Psoas muscle (tissue), 8 donors: ENCODE measurements at regions of chr10 and their contacts with region 1.

Region 1: GRCh38 chr10:123132576-123133477 is 2.9 kb upstream of the HMX3 start:
- DNase-seq: peak; percentile 80 to 90
- ATAC-seq: peak; percentile 83 to 89 (median 88)
- H3K4me3 ChIP-seq: peak overlapping the region; percentile 34
- H3K27ac ChIP-seq: no peak overlapping the region
- H3K4me1 ChIP-seq: peaks cover 29% of the 10 kb centered on the region
- H3K27me3 ChIP-seq: peaks cover 0 to 97% (median 53%) of the 10 kb centered on the region in 3 donors
- CTCF ChIP-seq: peak; percentile 89

Region 2: DNA sequence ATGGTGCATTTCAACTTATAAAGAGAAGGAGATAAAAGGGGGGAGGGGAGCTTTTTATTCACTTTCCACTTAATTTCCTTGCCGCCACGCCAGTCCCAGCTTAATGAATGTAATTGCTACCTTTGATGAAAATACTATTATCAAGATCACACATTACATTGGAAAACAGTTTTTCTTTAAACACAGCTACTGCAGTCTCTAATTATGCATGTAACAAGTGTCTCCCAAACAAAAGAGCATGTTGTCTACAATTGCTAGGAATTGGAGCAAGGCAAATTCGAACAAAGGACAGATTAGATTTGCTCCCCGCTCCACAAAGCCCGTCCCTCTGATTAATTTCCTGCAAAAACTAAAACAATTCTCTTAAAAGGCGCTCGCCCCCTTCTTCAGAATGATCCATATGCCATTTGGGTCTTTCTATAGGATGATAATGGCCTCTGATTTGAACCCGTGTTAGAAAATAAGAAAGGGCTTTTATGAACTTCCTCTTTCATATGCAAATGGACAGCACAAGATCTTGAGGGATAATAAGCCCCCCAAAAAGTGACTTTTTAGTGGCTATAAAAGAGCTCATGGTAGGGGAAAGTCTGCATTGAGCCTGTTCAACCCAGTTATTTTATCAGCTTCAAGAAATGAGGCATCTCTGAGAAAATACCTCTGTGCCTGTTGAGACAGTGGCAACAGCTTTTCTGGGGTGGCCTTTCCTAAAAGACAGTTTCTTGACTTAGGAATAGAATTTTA is 63.4 kb before region 1 on chr10:
- intact Hi-C with region 1: no loop called
- DNase-seq: no peak
- ATAC-seq: no peak
- H3K4me3 ChIP-seq: no peak overlapping the region
- H3K27ac ChIP-seq: no peak overlapping the region
- H3K4me1 ChIP-seq: no peaks in the 10 kb centered on the region
- H3K27me3 ChIP-seq: peaks cover 0 to 9% (median 3%) of the 10 kb centered on the region in 3 donors
- CTCF ChIP-seq: no peak

Region 3: DNA sequence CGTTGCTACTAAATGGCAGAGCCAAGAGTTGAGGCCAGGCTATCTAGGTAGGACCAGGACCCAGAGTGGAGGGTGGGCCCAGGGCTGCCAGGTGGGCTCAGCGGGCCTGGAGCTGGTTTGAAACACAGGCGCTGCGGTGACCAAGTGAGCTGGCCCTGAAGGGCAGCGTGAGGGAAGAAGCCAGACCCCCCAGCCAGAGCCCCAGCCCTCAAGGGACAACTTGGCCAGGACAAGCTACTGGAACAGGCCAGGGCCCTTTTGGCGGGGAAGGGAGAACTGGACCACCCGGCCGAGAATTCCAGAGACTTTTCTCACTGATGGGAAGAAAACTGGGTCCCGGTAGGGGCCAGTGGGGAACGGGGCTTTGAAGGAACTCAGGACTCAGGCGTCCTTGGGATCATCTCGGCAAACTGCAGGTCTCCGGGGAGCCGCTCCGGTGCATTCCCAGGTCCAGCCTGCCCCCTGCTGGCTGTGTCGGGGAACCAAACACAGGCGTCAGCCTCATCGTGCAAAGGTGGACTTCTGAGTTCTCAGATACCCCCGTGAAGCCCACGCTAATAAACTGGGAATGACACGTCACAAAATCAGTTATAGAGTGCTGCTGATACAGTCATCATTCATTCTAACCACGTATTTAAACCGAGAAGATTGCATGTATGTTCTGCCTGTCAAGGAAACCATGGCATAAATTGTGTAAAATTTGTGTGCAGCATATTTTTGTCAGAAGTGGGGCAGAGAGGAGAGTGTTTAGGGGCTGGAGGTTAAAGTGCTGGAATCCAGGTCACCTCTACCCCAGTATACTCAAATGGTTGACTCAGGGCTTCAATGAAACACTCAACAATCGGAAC is 834.8 kb after region 1 on chr10:
- intact Hi-C with region 1: loop called in 1 of 2 experiments (anchors 10 kb)
- DNase-seq: peak; percentile 74 to 83
- ATAC-seq: peak; percentile 75 to 90 (median 79)
- H3K4me3 ChIP-seq: no peak overlapping the region
- H3K27ac ChIP-seq: no peak overlapping the region
- H3K4me1 ChIP-seq: peaks cover 5% of the 10 kb centered on the region
- H3K27me3 ChIP-seq: peaks cover 0 to 74% (median 23%) of the 10 kb centered on the region in 3 donors
- CTCF ChIP-seq: peak; percentile 90